ENCODE measurements at regions of chr15 and their contacts with region 1.

Region 1: DNA sequence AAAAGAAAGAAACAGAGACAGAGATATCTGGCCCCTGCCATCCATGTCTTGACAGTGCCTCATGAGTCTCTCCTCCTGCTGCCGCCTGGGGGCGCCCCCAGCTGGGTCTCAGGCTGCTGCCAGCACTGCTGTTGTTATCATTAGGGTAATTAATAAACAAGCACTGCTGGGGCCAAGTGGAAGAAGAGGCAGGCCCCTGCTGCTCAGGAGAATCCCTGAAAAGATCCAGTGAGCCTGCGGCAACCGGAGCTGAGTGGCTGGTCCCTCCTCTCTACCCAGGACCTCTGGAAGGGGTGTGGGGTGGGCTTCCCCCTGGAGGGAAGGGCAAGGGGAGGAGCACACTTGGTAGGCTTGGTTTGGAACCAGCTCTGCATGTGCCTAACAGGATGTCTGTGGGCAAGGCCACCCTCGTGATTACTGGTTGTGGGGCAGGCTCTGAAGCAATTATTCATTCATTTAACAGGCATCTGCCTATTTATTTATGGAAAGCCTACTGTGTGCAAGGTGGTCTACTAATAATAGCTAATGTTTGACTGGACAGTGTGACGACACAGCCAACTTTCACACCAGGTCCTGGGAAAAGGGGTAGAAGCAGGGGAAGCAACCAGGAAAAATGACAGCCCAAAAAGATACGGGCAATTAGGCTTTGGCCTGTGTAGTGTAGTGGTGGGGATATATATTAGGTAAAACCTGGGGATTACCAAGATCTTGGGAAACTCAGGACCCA is 1.2 kb upstream of the TYRO3 start:
- DNase-seq: peak; percentile 58 to 83 (median 78)
- ATAC-seq: peak; percentile 87
- H3K4me3 ChIP-seq: no peak overlapping the region
- H3K4me3 Mint-ChIP-seq: peak overlapping the region; percentile 86 to 93 (median 89)
- H3K27ac ChIP-seq: no peak overlapping the region
- H3K27ac Mint-ChIP-seq: peak overlapping the region; percentile 53 to 95 (median 79)
- H3K4me1 ChIP-seq: peaks cover 15 to 19% of the 10 kb centered on the region in 2 donors
- H3K4me1 Mint-ChIP-seq: peaks cover 14 to 24% (median 20%) of the 10 kb centered on the region in 7 donors
- H3K27me3 ChIP-seq: peaks cover 3 to 6% of the 10 kb centered on the region in 2 donors
- H3K27me3 Mint-ChIP-seq: peaks cover 0 to 49% (median 19%) of the 10 kb centered on the region in 5 donors

Region 2: GRCh38 chr15:41493205-41493901 is 64.5 kb before region 1 on chr15 and contains the start of gene ITPKA:
- CTCF ChIA-PET with region 1: no interaction called
- POLR2A ChIA-PET with region 1: no interaction called
- intact Hi-C with region 1: loop called (anchors 1 to 10 kb)
- DNase-seq: peak; percentile 55 to 95 (median 67)
- ATAC-seq: peak; percentile 93
- H3K4me3 ChIP-seq: peak within 1 kb of the TSS; percentile 70
- H3K4me3 Mint-ChIP-seq: peak within 1 kb of the TSS; percentile 74 to 91 (median 87)
- H3K27ac ChIP-seq: peak within 1 kb of the TSS; percentile 29
- H3K27ac Mint-ChIP-seq: peak within 1 kb of the TSS in 4 of 9 donors; percentile 26 to 62 (median 57)
- H3K4me1 ChIP-seq: peaks cover 11 to 20% of the 10 kb centered on the region in 2 donors
- H3K4me1 Mint-ChIP-seq: peaks cover 6 to 35% (median 8%) of the 10 kb centered on the region in 7 donors
- H3K27me3 ChIP-seq: peaks cover 0 to 8% of the 10 kb centered on the region in 2 donors
- H3K27me3 Mint-ChIP-seq: peaks cover 33 to 44% (median 41%) of the 10 kb centered on the region in 5 donors
- total RNA-seq, gene ITPKA: 0.20 to 0.97 TPM in 2 of 5 experiments, not detected in the others

Region 3: DNA sequence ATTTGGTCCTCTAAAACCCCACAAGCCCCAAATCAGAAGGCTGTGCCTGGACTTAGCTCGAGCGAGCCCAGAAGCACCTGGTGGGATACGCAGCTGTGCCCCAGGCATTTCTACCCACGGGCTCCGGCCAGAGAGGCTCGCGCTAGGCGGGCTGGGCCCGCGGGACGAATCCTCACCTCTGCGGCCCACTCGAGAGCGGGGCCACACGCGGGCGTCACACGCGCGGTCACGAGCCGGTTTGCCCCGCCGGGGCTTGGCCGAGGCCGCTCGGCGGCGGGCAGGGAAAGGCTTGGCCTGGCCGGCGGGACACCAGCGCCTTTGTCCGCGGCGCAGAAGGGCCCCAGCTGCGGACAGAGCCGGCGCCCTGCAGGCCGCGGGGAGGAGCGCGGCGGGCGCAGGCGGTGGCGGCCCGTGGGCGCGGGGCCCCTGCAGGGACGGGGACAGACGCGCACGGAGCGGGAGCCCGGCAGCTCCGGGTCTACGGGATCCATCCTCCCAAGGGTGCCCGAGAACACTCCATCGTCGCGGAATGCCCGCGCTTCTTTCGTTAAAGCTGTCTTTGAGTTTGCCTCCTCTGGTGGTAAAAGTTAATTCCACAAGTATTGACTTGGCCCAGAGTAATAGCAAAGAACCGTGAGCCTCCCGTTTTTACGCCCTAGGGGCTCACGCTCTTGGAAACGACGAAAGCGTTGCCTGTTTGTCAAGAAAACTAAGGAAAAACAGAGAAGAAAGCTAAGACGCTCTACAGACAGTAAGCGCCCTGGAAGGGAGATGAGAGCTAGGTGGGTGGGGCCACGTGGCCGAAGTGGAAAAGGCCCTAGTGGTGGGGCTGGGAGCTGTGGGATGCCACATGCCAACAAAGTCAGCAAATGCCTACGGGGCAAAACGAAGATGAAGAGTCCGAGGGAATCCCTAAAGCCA is 27.6 kb after region 1 on chr15:
- CTCF ChIA-PET with region 1: interaction called, 5 read pairs
- POLR2A ChIA-PET with region 1: interaction called, 4 read pairs
- intact Hi-C with region 1: loop called in 1 of 2 experiments (anchors 1 kb)
- DNase-seq: peak in 6 of 9 donors; percentile 16 to 39 (median 20)
- ATAC-seq: peak; percentile 75
- H3K4me3 ChIP-seq: peak overlapping the region; percentile 30
- H3K4me3 Mint-ChIP-seq: peak overlapping the region; percentile 63 to 85 (median 76)
- H3K27ac ChIP-seq: no peak overlapping the region
- H3K27ac Mint-ChIP-seq: no peak overlapping the region
- H3K4me1 ChIP-seq: peaks cover 0 to 5% of the 10 kb centered on the region in 2 donors
- H3K4me1 Mint-ChIP-seq: peaks cover 6 to 10% (median 9%) of the 10 kb centered on the region in 7 donors
- H3K27me3 ChIP-seq: peaks cover 0 to 5% of the 10 kb centered on the region in 2 donors
- H3K27me3 Mint-ChIP-seq: peaks cover 29 to 69% (median 38%) of the 10 kb centered on the region in 5 donors

Region 4: GRCh38 chr15:41621200-41622193 is 63.7 kb after region 1 on chr15:
- CTCF ChIA-PET with region 1: no interaction called
- POLR2A ChIA-PET with region 1: no interaction called
- intact Hi-C with region 1: loop called in 1 of 2 experiments (anchors 2 kb)
- DNase-seq: peak; percentile 56 to 81 (median 78)
- ATAC-seq: peak; percentile 87
- H3K4me3 ChIP-seq: peak overlapping the region; percentile 67
- H3K4me3 Mint-ChIP-seq: peak overlapping the region; percentile 55 to 87 (median 78)
- H3K27ac ChIP-seq: peak overlapping the region; percentile 41
- H3K27ac Mint-ChIP-seq: peak overlapping the region; percentile 68 to 87 (median 77)
- H3K4me1 ChIP-seq: peaks cover 5 to 8% of the 10 kb centered on the region in 2 donors
- H3K4me1 Mint-ChIP-seq: peaks cover 5 to 29% (median 18%) of the 10 kb centered on the region in 7 donors
- H3K27me3 ChIP-seq: no peaks in the 10 kb centered on the region
- H3K27me3 Mint-ChIP-seq: peaks cover 0 to 29% (median 0%) of the 10 kb centered on the region in 5 donors

Region 5: GRCh38 chr15:41648770-41649169 is 90.9 kb after region 1 on chr15:
- CTCF ChIA-PET with region 1: no interaction called
- POLR2A ChIA-PET with region 1: no interaction called
- intact Hi-C with region 1: no loop called
- DNase-seq: no peak
- ATAC-seq: no peak
- H3K4me3 ChIP-seq: no peak overlapping the region
- H3K4me3 Mint-ChIP-seq: no peak overlapping the region
- H3K27ac ChIP-seq: no peak overlapping the region
- H3K27ac Mint-ChIP-seq: no peak overlapping the region
- H3K4me1 ChIP-seq: no peaks in the 10 kb centered on the region
- H3K4me1 Mint-ChIP-seq: peaks cover 0 to 5% (median 2%) of the 10 kb centered on the region in 7 donors
- H3K27me3 ChIP-seq: no peaks in the 10 kb centered on the region
- H3K27me3 Mint-ChIP-seq: peaks cover 0 to 16% (median 0%) of the 10 kb centered on the region in 5 donors

Region 6: DNA sequence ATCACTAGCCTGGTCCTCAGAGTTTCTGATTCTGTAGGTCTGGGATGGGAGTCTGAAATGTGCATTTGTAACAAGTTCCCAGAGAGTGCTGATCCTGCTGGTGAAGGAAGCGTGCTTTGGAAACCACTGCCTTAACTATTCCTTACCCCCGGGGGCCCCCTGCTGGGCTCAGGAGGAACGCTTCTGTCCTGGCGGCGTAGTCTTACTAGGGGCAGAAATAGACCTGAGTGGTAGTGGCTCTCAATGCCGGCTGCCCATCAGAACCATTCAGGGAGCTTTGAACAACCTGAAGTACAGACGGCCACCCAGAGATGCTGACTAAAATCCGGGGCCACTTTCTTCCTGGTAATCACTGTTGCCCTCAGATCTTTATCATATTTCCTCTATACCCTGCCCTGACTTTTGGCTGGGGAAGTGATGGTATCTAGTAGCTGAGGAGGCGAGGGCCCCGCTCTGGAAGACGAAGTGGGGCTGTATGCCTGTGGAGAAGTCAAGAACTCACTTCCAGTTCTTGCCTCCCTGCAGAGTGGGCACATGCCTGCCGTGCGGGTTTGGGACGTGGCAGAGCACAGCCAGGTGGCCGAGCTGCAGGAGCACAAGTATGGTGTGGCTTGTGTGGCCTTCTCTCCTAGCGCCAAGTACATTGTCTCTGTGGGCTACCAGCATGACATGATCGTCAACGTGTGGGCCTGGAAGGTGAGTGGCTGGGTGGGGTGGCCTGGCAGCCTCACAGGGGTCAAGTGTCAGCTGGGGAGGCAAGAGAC is 253.8 kb after region 1 on chr15:
- CTCF ChIA-PET with region 1: interaction called, 9 read pairs
- POLR2A ChIA-PET with region 1: no interaction called
- intact Hi-C with region 1: loop called in 1 of 2 experiments (anchors 1 kb)
- DNase-seq: peak; percentile 58 to 77 (median 72)
- ATAC-seq: peak; percentile 95
- H3K4me3 ChIP-seq: no peak overlapping the region
- H3K4me3 Mint-ChIP-seq: peak overlapping the region in 1 of 10 donors; percentile 30
- H3K27ac ChIP-seq: no peak overlapping the region
- H3K27ac Mint-ChIP-seq: peak overlapping the region in 1 of 9 donors; percentile 58
- H3K4me1 ChIP-seq: peaks cover 0 to 3% of the 10 kb centered on the region in 2 donors
- H3K4me1 Mint-ChIP-seq: peaks cover 8 to 28% (median 12%) of the 10 kb centered on the region in 7 donors
- H3K27me3 ChIP-seq: no peaks in the 10 kb centered on the region
- H3K27me3 Mint-ChIP-seq: no peaks in the 10 kb centered on the region

Region 7: DNA sequence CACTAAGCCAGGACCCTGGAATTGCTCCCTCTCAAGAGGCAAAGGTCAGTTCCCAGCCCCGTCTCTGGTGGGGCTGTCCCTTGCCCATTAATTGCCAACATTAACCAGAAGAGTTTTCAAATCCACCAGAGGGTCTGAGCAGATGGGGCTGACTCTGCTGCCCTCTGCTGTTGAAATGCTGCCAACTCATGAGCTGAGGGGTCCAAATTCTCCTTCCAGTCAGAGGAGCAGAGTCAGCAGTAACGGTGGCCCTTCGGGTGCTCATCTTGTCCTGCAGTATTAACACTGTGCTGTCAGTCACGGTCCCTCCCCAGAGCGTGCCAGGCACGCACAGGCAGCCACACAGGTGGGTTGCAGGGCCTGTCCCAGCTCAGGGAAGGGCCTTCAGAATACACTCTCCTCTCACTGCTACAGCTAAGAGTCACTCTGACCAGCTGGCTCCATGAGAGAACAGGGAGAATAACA is 346.7 kb after region 1 on chr15:
- CTCF ChIA-PET with region 1: interaction called, 5 read pairs
- POLR2A ChIA-PET with region 1: no interaction called
- intact Hi-C with region 1: loop called (anchors 1 to 2 kb)
- DNase-seq: peak; percentile 54 to 76 (median 64)
- ATAC-seq: peak; percentile 89
- H3K4me3 ChIP-seq: no peak overlapping the region
- H3K4me3 Mint-ChIP-seq: no peak overlapping the region
- H3K27ac ChIP-seq: no peak overlapping the region
- H3K27ac Mint-ChIP-seq: peak overlapping the region; percentile 9 to 90 (median 62)
- H3K4me1 ChIP-seq: peaks cover 0 to 9% of the 10 kb centered on the region in 2 donors
- H3K4me1 Mint-ChIP-seq: peaks cover 2 to 14% (median 6%) of the 10 kb centered on the region in 7 donors
- H3K27me3 ChIP-seq: no peaks in the 10 kb centered on the region
- H3K27me3 Mint-ChIP-seq: no peaks in the 10 kb centered on the region

Region 8: DNA sequence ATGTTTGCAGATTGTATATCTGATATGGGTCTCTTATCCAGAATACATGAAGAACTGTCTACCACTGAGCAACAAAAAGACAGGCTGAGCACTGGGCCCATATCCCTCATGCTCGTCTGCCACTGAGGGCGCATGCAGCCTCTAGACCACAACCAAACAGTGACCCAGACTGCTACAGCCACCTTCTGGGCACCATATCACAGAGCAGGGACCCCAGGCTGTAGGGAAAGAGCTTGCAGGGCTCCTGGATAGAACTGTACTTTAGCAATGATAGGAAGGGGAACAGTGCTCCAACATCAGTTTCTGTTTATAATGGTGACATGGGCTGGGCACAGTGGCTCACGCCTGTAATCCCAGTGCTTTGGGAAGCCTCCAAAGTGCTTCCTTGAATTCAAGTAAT is 755.6 kb after region 1 on chr15:
- CTCF ChIA-PET with region 1: no interaction called
- POLR2A ChIA-PET with region 1: no interaction called
- intact Hi-C with region 1: no loop called
- DNase-seq: no peak
- ATAC-seq: no peak
- H3K4me3 ChIP-seq: no peak overlapping the region
- H3K4me3 Mint-ChIP-seq: no peak overlapping the region
- H3K27ac ChIP-seq: no peak overlapping the region
- H3K27ac Mint-ChIP-seq: peak overlapping the region in 1 of 9 donors; percentile 57
- H3K4me1 ChIP-seq: no peaks in the 10 kb centered on the region
- H3K4me1 Mint-ChIP-seq: no peaks in the 10 kb centered on the region
- H3K27me3 ChIP-seq: no peaks in the 10 kb centered on the region
- H3K27me3 Mint-ChIP-seq: no peaks in the 10 kb centered on the region